Adrenal gland (tissue), 19 donors: ENCODE measurements at regions of chr9 and their contacts with region 1.

Region 1: DNA sequence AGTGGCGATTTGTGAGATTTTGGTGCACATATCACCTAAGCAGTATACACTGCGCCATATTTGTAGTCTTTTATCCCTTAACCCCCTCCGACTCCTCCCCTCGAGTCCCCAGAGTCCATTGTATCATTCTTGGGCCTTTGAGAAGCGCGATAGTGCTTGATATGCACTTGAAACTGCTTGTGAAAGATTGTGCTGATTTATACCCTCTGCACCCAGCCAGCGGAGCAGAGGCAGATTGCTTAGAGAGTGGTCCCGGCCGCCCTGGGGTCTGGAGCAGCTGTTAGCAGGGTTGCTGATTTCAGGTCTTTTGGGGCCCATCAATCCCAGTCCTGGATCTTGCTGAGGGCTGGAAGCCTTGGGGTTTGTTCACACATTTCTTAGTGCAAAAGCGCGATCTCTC is 13.0 kb upstream of the FAM240B start:
- DNase-seq: no peak
- H3K4me3 ChIP-seq: no peak overlapping the region
- H3K27ac ChIP-seq: no peak overlapping the region
- H3K4me1 ChIP-seq: no peaks in the 10 kb centered on the region
- H3K27me3 ChIP-seq: peaks cover 6% of the 10 kb centered on the region
- CTCF ChIP-seq: no peak
- POLR2A ChIP-seq: no peak

Region 2: DNA sequence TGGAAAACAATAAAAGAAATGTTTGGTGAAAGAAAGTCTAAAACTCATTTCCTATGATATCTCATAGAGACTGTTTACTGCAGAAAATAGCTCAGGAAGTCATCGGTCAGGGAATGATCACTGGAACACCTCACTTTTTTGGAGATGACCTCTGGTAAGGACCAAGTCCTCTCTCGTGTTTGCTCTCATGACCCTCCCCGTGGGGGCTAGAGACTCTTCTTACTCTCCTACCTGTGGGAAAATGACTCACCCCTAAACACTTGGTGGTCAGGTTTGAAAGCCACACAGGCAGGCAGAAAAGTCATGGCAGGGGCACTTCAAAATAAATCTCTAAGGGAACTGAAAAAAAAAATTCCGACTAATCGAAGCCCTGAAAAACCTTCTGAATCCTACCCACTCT is 61.1 kb before region 1 on chr9:
- intact Hi-C with region 1: loop called in 1 of 2 experiments (anchors 10 kb)
- DNase-seq: no peak
- H3K4me3 ChIP-seq: no peak overlapping the region
- H3K27ac ChIP-seq: no peak overlapping the region
- H3K4me1 ChIP-seq: peaks cover 0 to 4% of the 10 kb centered on the region in 2 donors
- H3K27me3 ChIP-seq: no peaks in the 10 kb centered on the region
- CTCF ChIP-seq: no peak
- POLR2A ChIP-seq: no peak